ENCODE measurements at regions of chr9 and their contacts with region 1.

Region 1: DNA sequence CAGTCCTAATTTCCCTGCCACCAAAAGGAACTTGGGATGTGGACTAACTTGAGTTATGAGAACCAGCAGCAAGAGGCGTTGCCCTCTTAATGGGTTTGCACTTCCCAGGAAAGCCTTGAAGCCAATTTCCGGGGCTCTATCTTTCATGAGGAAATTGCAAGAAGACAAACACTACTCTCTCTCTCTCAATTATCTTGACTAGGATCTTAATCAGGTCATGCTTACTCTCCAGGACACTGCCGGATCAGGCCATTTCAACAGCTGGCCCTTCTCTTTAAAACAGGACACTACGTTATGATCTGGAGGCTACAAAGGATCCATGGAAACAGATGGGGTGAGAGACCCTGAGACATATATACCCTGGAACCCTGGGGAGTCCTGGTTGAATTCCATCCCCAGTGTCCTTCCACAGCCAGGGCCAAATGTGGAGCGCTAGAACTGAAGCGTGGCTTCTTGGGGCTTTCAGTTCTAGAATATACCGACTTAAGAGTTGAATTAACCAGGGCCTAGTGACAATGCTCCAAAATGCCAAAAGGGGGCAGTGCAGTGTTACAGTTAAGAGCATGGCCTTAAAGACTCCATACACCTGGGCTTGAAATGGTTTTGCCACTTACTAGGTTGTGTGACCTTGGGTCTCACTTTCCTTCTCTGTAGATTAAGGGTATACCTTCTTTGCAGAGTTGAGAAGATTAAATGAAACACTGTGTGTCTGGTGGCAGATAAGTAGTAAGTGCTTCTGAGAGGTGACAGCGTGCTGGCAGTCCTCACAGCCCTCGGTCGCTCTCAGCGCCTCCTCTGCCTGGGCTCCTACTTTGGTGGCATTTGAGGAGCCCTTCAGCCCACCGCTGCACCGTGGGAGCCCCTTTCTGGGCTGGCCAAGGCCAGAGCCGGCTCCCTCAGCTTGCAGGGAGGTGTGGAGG is 21.1 kb downstream of the FAM219A start:
- DNase-seq: peak; percentile 20 to 83 (median 61)
- ATAC-seq: peak; percentile 90
- H3K4me3 ChIP-seq: no peak overlapping the region
- H3K4me3 Mint-ChIP-seq: no peak overlapping the region
- H3K27ac ChIP-seq: no peak overlapping the region
- H3K27ac Mint-ChIP-seq: no peak overlapping the region
- H3K4me1 ChIP-seq: peaks cover 8% of the 10 kb centered on the region
- H3K4me1 Mint-ChIP-seq: peaks cover 17% of the 10 kb centered on the region
- H3K27me3 ChIP-seq: no peaks in the 10 kb centered on the region
- H3K27me3 Mint-ChIP-seq: no peaks in the 10 kb centered on the region
- CTCF ChIP-seq: peak; percentile 77

Region 2: DNA sequence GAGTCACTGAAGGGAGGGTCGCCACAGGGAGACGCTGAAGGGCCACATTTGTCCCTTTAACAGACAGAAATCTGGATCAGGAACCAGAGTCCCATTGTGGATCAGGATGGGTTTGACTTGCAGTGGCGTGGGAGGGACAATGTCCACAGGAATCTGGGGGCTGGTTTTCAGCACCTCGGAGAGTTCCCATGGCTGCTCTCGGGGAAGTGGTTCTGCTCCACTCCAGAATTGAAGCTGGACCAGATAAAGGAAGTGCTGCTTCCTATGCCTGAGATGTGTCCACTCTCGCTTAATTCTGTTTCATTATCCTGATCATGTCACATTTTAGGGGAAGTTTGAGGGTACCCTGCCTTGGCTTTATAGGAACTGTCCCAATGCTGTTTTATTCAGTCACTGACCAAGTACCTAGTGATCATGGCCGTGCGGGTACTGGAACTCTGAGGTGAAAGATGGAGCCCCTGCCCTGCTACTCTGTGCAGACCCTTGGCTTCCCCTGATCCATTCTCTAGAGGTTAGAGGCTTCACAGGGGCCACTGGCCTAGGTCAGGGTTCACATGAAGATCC is 56.8 kb after region 1 on chr9:
- CTCF ChIA-PET with region 1: interaction called, 100 read pairs
- POLR2A ChIA-PET with region 1: no interaction called
- intact Hi-C with region 1: no loop called
- DNase-seq: peak in 6 of 9 experiments; percentile 11 to 36 (median 28)
- ATAC-seq: no peak
- H3K4me3 ChIP-seq: no peak overlapping the region
- H3K4me3 Mint-ChIP-seq: no peak overlapping the region
- H3K27ac ChIP-seq: no peak overlapping the region
- H3K27ac Mint-ChIP-seq: no peak overlapping the region
- H3K4me1 ChIP-seq: no peaks in the 10 kb centered on the region
- H3K4me1 Mint-ChIP-seq: no peaks in the 10 kb centered on the region
- H3K27me3 ChIP-seq: no peaks in the 10 kb centered on the region
- H3K27me3 Mint-ChIP-seq: peaks cover 24% of the 10 kb centered on the region
- CTCF ChIP-seq: no peak

Region 3: GRCh38 chr9:34500623-34501267 is 63.5 kb after region 1 on chr9:
- CTCF ChIA-PET with region 1: interaction called, 100 read pairs
- POLR2A ChIA-PET with region 1: no interaction called
- intact Hi-C with region 1: loop called in 1 of 2 experiments (anchors 1 kb)
- DNase-seq: peak; percentile 52 to 84 (median 73)
- ATAC-seq: peak; percentile 97
- H3K4me3 ChIP-seq: no peak overlapping the region
- H3K4me3 Mint-ChIP-seq: no peak overlapping the region
- H3K27ac ChIP-seq: no peak overlapping the region
- H3K27ac Mint-ChIP-seq: no peak overlapping the region
- H3K4me1 ChIP-seq: no peaks in the 10 kb centered on the region
- H3K4me1 Mint-ChIP-seq: no peaks in the 10 kb centered on the region
- H3K27me3 ChIP-seq: no peaks in the 10 kb centered on the region
- H3K27me3 Mint-ChIP-seq: peaks cover 10% of the 10 kb centered on the region
- CTCF ChIP-seq: peak; percentile 91

Region 4: GRCh38 chr9:34546834-34547827 is 109.9 kb after region 1 on chr9:
- CTCF ChIA-PET with region 1: no interaction called
- POLR2A ChIA-PET with region 1: no interaction called
- intact Hi-C with region 1: loop called in 1 of 2 experiments (anchors 1 kb)
- DNase-seq: peak in 7 of 9 experiments; percentile 22 to 55 (median 48)
- ATAC-seq: peak; percentile 56
- H3K4me3 ChIP-seq: no peak overlapping the region
- H3K4me3 Mint-ChIP-seq: no peak overlapping the region
- H3K27ac ChIP-seq: no peak overlapping the region
- H3K27ac Mint-ChIP-seq: no peak overlapping the region
- H3K4me1 ChIP-seq: no peaks in the 10 kb centered on the region
- H3K4me1 Mint-ChIP-seq: no peaks in the 10 kb centered on the region
- H3K27me3 ChIP-seq: no peaks in the 10 kb centered on the region
- H3K27me3 Mint-ChIP-seq: peaks cover 22% of the 10 kb centered on the region
- CTCF ChIP-seq: peak; percentile 31

Region 5: DNA sequence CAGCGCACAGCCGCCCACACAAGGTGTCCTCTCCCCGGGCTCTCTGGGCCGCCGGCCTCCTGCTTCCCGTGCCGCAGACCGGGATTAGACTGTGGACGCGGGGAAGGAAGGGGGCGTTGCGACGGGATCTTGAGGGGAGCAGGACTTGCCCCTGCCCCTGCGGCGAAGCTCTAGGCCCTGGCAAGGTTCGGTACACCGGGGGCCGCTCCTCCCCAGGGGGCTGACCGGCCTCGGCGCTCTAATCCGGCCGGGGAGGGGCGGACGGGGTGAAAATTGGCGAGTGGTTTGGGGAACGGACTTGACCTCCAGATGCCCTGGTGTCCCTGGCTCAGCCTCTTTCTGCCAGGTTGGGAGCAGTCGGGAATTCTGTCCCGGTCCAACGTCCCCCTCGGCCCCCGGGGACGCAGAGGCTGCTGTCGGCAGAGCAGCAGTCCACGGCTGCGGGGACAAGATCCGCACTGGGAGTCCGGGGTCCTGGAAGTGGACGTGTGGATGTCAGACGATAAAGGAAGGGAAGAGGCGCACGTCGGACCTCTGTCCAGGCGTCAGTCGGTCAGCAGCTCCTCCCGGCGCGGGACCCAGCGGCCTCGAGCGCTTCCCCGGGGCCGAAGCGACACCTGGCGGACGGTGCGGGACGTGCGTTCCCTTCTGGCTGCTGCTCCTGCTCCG is 154.1 kb after region 1 on chr9:
- CTCF ChIA-PET with region 1: interaction called, 14 read pairs
- POLR2A ChIA-PET with region 1: no interaction called
- intact Hi-C with region 1: loop called in 1 of 2 experiments (anchors 1 kb)
- DNase-seq: peak; percentile 59 to 86 (median 80)
- ATAC-seq: peak; percentile 83
- H3K4me3 ChIP-seq: peak overlapping the region; percentile 54 to 73
- H3K4me3 Mint-ChIP-seq: peak overlapping the region; percentile 78
- H3K27ac ChIP-seq: no peak overlapping the region
- H3K27ac Mint-ChIP-seq: no peak overlapping the region
- H3K4me1 ChIP-seq: peaks cover 9% of the 10 kb centered on the region
- H3K4me1 Mint-ChIP-seq: peaks cover 32% of the 10 kb centered on the region
- H3K27me3 ChIP-seq: peaks cover 26 to 47% of the 10 kb centered on the region in 2 experiments
- H3K27me3 Mint-ChIP-seq: peaks cover 70% of the 10 kb centered on the region
- CTCF ChIP-seq: peak; percentile 74

Region 6: DNA sequence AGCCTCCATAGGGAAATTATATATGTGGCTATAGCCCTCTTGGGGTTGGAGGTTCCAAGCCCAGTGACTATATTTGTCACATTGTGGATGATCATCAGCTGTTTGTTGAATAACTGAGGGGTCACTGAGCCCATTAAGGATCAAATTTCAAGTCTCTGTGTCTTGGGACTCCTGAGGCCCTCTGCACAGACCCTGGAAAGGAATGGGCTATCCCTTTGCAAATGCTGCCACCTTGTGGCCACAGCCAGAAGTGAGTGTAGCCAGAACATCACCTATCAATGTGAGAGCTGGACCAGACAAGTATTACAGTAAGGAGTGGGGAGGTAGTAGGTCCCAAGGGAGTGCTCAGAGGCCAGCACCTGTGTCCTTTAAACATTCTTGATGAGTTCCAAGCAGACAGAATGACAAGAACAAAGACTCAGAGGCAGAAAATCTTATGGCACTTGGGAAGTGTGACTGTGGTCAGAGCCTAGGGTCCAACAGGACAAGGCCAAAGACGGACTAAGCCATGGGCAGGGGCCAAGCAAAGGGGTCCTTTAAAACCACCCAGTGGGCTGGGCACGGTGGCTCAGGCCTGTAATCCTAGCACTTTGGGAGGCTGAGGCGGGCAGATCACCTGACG is 166.5 kb after region 1 on chr9:
- CTCF ChIA-PET with region 1: interaction called, 3 read pairs
- POLR2A ChIA-PET with region 1: no interaction called
- intact Hi-C with region 1: loop called in 1 of 2 experiments (anchors 1 kb)
- DNase-seq: peak; percentile 59 to 87 (median 80)
- ATAC-seq: peak; percentile 98
- H3K4me3 ChIP-seq: no peak overlapping the region
- H3K4me3 Mint-ChIP-seq: no peak overlapping the region
- H3K27ac ChIP-seq: no peak overlapping the region
- H3K27ac Mint-ChIP-seq: no peak overlapping the region
- H3K4me1 ChIP-seq: no peaks in the 10 kb centered on the region
- H3K4me1 Mint-ChIP-seq: no peaks in the 10 kb centered on the region
- H3K27me3 ChIP-seq: no peaks in the 10 kb centered on the region
- H3K27me3 Mint-ChIP-seq: peaks cover 3% of the 10 kb centered on the region
- CTCF ChIP-seq: peak; percentile 92

Measured in CD8-positive, alpha-beta T cell (primary cell).